ENCODE measurements at regions of chr12 and their contacts with region 1.

Region 1: GRCh38 chr12:12837025-12837872 is 24.1 kb downstream of the DDX47 start:
- DNase-seq: no peak
- H3K4me3 ChIP-seq: no peak overlapping the region
- H3K27me3 ChIP-seq: no peaks in the 10 kb centered on the region
- CTCF ChIP-seq: peak; percentile 65

Region 2: DNA sequence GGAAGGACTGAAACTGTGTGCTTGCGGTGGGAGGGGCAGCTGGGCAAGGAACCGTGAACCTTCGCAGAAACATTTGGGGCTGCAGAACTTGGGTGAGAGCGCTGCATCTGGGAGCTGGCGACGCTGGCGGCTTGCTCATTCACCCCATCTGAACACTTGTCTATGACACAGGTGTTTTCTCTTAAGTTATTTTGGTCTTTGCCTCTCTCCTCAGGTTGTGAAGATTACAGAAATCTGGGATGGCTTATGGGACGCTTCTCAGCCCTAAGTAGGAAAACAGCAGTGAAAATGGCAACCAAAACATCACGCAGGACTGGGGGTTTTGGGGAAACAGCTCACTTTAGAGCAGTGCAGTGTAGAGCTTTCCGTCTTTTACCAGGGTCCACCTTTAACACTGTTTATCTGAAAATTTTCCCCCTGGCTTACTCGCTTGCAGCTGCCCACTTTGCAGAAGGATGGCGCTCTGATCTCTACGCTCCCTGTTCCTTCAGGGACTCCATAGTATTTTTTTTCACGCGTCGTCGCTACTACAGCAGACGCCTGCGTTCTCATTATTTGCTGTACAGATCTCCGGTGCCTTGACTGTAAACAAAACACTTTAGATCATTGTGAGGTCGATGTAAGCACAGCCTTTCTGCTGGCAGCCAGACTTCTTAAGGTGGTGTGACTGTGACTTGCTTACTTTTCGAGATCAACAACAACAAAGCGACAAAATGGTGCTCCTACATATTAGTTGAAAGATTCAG is 122.8 kb before region 1 on chr12:
- CTCF ChIA-PET with region 1: no interaction called
- POLR2A ChIA-PET with region 1: no interaction called
- DNase-seq: no peak
- H3K4me3 ChIP-seq: peak overlapping the region; percentile 10
- H3K27me3 ChIP-seq: no peaks in the 10 kb centered on the region
- CTCF ChIP-seq: peak; percentile 43

Region 3: GRCh38 chr12:12819671-12820311 is 17.5 kb before region 1 on chr12:
- CTCF ChIA-PET with region 1: interaction called, 39 read pairs
- POLR2A ChIA-PET with region 1: interaction called, 6 read pairs
- DNase-seq: peak; percentile 97
- H3K4me3 ChIP-seq: no peak overlapping the region
- H3K27me3 ChIP-seq: no peaks in the 10 kb centered on the region
- CTCF ChIP-seq: no peak

Region 4: DNA sequence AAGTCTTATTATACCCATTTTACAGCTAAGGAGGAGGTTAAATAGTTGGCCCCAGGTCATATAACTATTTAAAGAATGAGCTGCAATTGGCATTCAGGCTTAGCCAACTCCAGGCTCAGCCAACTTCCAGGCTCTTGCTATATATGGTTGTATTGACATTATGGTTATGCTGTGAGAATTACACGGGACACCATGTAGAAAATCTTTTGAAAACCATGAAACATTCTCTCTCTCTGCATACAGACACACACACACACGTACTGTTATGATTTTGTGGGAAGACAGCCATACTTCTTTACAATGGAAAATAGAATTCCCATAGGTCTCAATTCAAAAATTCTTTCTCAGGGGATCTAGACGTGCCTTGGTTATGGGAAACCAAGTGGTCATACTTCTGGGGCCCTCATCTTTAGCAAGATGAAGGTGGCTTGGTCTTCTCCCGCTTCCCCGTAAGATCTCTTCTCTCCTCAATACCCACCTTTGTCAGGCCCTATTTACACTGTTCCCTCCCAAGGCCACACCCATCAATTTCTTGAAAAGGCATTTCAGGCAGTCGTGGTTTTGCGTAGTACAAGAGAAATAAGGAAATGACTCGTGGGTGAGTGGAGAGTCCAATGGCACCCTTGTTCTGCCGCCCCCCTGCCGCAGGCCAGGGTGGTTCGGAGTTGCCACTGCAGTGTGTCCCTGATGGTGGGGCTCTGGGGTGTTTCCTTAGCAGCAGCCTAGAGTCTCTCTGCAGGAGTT is 44.1 kb after region 1 on chr12:
- CTCF ChIA-PET with region 1: interaction called, 3 read pairs
- POLR2A ChIA-PET with region 1: interaction called, 10 read pairs
- DNase-seq: no peak
- H3K4me3 ChIP-seq: no peak overlapping the region
- H3K27me3 ChIP-seq: no peaks in the 10 kb centered on the region
- CTCF ChIP-seq: no peak

Region 5: GRCh38 chr12:12890815-12891645 is 53.8 kb after region 1 on chr12 and contains the start of gene GPRC5A:
- CTCF ChIA-PET with region 1: interaction called, 41 read pairs
- POLR2A ChIA-PET with region 1: no interaction called
- DNase-seq: peak; percentile 96
- H3K4me3 ChIP-seq: peak within 1 kb of the TSS; percentile 66
- H3K27me3 ChIP-seq: no peaks in the 10 kb centered on the region
- CTCF ChIP-seq: peak; percentile 47
- polyA plus RNA-seq, gene GPRC5A: 230 and 241 TPM in 2 replicates

Region 6: GRCh38 chr12:12899530-12900380 is 62.5 kb after region 1 on chr12:
- CTCF ChIA-PET with region 1: interaction called, 16 read pairs
- POLR2A ChIA-PET with region 1: no interaction called
- DNase-seq: peak; percentile 76
- H3K4me3 ChIP-seq: no peak overlapping the region
- H3K27me3 ChIP-seq: no peaks in the 10 kb centered on the region
- CTCF ChIP-seq: no peak

Region 7: GRCh38 chr12:12983420-12984035 is 146.3 kb after region 1 on chr12:
- CTCF ChIA-PET with region 1: interaction called, 16 read pairs
- POLR2A ChIA-PET with region 1: no interaction called
- DNase-seq: no peak
- H3K4me3 ChIP-seq: no peak overlapping the region
- H3K27me3 ChIP-seq: no peaks in the 10 kb centered on the region
- CTCF ChIP-seq: peak; percentile 73

Measured in BJ (cell line).